CD4-positive, alpha-beta T cell (primary cell): ENCODE measurements at regions of chr18 and their contacts with region 1.

Region 1: DNA sequence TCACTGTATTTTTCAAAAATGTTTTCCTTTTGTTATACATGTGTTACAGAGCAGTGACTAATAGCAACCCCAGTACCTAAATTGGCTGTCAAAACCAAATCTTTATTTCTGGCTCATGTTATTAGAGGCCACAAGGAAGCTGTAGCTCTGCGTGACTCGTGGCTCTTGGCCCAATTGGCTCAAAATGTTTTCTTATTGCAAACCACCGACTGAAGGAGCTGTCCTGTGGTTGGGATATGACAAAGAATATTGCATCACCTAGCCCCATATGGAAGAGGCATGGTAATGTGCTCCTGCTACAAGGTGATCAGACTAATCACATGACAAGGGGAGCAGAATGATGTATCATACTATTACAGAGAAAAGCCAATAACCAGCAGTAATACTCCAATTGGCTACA is 1058.5 kb downstream of the CBLN2 start:
- DNase-seq: no peak
- ATAC-seq: no peak
- H3K4me3 ChIP-seq: no peak overlapping the region
- H3K4me3 Mint-ChIP-seq: no peak overlapping the region
- H3K27ac ChIP-seq: no peak overlapping the region
- H3K27ac Mint-ChIP-seq: no peak overlapping the region
- H3K4me1 ChIP-seq: no peaks in the 10 kb centered on the region
- H3K4me1 Mint-ChIP-seq: no peaks in the 10 kb centered on the region
- H3K27me3 ChIP-seq: no peaks in the 10 kb centered on the region
- H3K27me3 Mint-ChIP-seq: no peaks in the 10 kb centered on the region
- CTCF ChIP-seq: no peak

Region 2: GRCh38 chr18:71503222-71503621 is 17.6 kb after region 1 on chr18:
- CTCF ChIA-PET with region 1: no interaction called
- POLR2A ChIA-PET with region 1: no interaction called
- intact Hi-C with region 1: no loop called
- DNase-seq: no peak
- ATAC-seq: no peak
- H3K4me3 ChIP-seq: no peak overlapping the region
- H3K4me3 Mint-ChIP-seq: no peak overlapping the region
- H3K27ac ChIP-seq: no peak overlapping the region
- H3K27ac Mint-ChIP-seq: no peak overlapping the region
- H3K4me1 ChIP-seq: no peaks in the 10 kb centered on the region
- H3K4me1 Mint-ChIP-seq: no peaks in the 10 kb centered on the region
- H3K27me3 ChIP-seq: no peaks in the 10 kb centered on the region
- H3K27me3 Mint-ChIP-seq: no peaks in the 10 kb centered on the region
- CTCF ChIP-seq: no peak

Region 3: GRCh38 chr18:71529703-71530303 is 44.2 kb after region 1 on chr18:
- CTCF ChIA-PET with region 1: no interaction called
- POLR2A ChIA-PET with region 1: no interaction called
- intact Hi-C with region 1: loop called in 1 of 2 experiments (anchors 5 kb)
- DNase-seq: no peak
- ATAC-seq: no peak
- H3K4me3 ChIP-seq: no peak overlapping the region
- H3K4me3 Mint-ChIP-seq: no peak overlapping the region
- H3K27ac ChIP-seq: no peak overlapping the region
- H3K27ac Mint-ChIP-seq: no peak overlapping the region
- H3K4me1 ChIP-seq: no peaks in the 10 kb centered on the region
- H3K4me1 Mint-ChIP-seq: no peaks in the 10 kb centered on the region
- H3K27me3 ChIP-seq: no peaks in the 10 kb centered on the region
- H3K27me3 Mint-ChIP-seq: no peaks in the 10 kb centered on the region
- CTCF ChIP-seq: no peak

Region 4: GRCh38 chr18:71682557-71682956 is 196.9 kb after region 1 on chr18:
- CTCF ChIA-PET with region 1: no interaction called
- POLR2A ChIA-PET with region 1: no interaction called
- intact Hi-C with region 1: no loop called
- DNase-seq: no peak
- ATAC-seq: no peak
- H3K4me3 ChIP-seq: no peak overlapping the region
- H3K4me3 Mint-ChIP-seq: no peak overlapping the region
- H3K27ac ChIP-seq: no peak overlapping the region
- H3K27ac Mint-ChIP-seq: no peak overlapping the region
- H3K4me1 ChIP-seq: no peaks in the 10 kb centered on the region
- H3K4me1 Mint-ChIP-seq: no peaks in the 10 kb centered on the region
- H3K27me3 ChIP-seq: no peaks in the 10 kb centered on the region
- H3K27me3 Mint-ChIP-seq: no peaks in the 10 kb centered on the region
- CTCF ChIP-seq: no peak

Region 5: DNA sequence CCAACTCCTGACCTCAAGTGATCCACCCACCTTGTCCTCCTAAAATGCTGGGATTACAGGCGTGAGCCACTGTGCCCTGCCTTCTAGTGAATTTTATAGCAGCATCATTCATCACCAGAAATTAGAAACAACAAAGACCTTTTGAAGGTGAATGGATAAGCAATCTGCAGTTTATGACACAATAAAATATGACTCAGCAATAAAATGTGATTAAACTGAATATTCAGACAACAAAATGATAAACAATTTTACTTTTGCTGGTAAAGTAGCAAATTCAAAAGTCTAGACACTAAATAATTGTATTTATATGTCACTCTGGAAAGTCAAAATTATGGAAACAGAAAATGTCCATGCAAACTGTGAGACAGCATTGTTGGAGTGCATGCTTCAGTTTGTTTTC is 401.9 kb after region 1 on chr18:
- CTCF ChIA-PET with region 1: no interaction called
- POLR2A ChIA-PET with region 1: no interaction called
- intact Hi-C with region 1: no loop called
- DNase-seq: no peak
- ATAC-seq: no peak
- H3K4me3 ChIP-seq: no peak overlapping the region
- H3K4me3 Mint-ChIP-seq: no peak overlapping the region
- H3K27ac ChIP-seq: no peak overlapping the region
- H3K27ac Mint-ChIP-seq: no peak overlapping the region
- H3K4me1 ChIP-seq: no peaks in the 10 kb centered on the region
- H3K4me1 Mint-ChIP-seq: no peaks in the 10 kb centered on the region
- H3K27me3 ChIP-seq: no peaks in the 10 kb centered on the region
- H3K27me3 Mint-ChIP-seq: no peaks in the 10 kb centered on the region
- CTCF ChIP-seq: no peak

Region 6: DNA sequence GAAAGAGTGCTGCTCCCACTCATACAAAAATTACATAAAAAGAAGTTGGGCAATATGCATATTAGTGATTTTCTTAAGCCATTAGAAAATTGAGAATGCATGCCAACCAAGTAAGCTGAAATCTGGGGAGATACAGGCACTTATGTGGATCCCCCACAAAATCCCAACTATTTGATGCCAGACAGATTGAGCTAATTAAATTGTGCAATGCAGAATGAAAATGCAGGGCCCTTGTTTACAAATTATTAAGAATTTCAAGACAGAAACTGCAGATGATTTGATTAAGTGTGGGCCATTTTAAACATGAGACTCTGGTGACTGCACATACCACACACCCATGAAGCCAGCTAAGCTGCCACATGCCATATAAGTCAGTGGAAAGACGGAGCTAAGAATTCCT is 504.0 kb after region 1 on chr18:
- CTCF ChIA-PET with region 1: no interaction called
- POLR2A ChIA-PET with region 1: no interaction called
- intact Hi-C with region 1: no loop called
- DNase-seq: no peak
- ATAC-seq: no peak
- H3K4me3 ChIP-seq: no peak overlapping the region
- H3K4me3 Mint-ChIP-seq: no peak overlapping the region
- H3K27ac ChIP-seq: no peak overlapping the region
- H3K27ac Mint-ChIP-seq: no peak overlapping the region
- H3K4me1 ChIP-seq: no peaks in the 10 kb centered on the region
- H3K4me1 Mint-ChIP-seq: no peaks in the 10 kb centered on the region
- H3K27me3 ChIP-seq: no peaks in the 10 kb centered on the region
- H3K27me3 Mint-ChIP-seq: no peaks in the 10 kb centered on the region
- CTCF ChIP-seq: no peak